OCI-LY7 (cell line): ENCODE measurements at regions of chr3 and their contacts with region 1.

Region 1: DNA sequence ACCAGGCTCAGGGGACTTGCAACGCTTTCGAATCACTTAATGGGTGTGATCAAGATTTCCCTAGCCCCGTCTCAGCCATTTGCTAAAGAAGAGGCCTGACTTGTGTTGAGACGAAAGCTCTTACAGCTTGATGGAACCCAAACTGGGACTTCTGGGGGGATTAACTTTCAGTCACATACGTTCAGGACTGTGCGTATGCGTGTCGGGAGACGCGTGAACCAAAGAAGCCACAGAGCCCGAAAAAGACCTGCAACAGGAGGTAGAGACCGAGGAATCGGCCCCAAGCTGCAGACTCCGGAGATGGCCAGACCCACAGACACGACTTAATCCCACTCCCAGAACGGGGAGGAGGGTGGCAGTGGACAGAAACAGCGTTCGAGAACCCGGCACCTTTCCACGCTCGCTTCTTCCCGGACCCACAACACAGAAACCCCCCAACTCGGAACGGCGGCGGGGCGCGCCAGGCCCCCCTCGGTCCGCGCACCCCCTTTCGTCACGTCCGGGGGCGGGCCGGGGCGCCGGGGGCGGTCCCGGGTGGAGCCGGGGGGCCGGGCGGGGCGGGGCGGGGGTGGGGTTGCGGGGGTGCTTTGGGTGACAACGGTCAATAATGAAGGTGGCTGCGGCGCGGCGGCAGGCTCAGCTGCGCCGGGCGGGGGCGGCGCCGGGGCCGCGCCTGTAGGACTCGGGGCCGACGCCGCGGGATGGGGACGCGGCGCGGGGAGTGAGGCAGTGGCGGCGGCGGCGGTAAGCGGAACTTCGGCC is at the start of gene ATP11B:
- DNase-seq: peak; percentile 88
- H3K4me3 ChIP-seq: peak within 1 kb of the TSS; percentile 86
- H3K27ac ChIP-seq: peak within 1 kb of the TSS; percentile 72
- H3K4me1 ChIP-seq: peaks cover 37% of the 10 kb centered on the region
- CTCF ChIP-seq: no peak
- total RNA-seq, gene ATP11B: 55.6 and 58.6 TPM in 2 replicates

Region 2: GRCh38 chr3:182814419-182815062 is 21.5 kb after region 1 on chr3:
- CTCF ChIA-PET with region 1: no interaction called
- POLR2A ChIA-PET with region 1: interaction called, 10 read pairs
- intact Hi-C with region 1: no loop called
- DNase-seq: no peak
- H3K4me3 ChIP-seq: no peak overlapping the region
- H3K27ac ChIP-seq: no peak overlapping the region
- H3K4me1 ChIP-seq: no peaks in the 10 kb centered on the region
- CTCF ChIP-seq: no peak